K562 (cell line): ENCODE measurements at regions of chr15 and their contacts with region 1.

Region 1: GRCh38 chr15:50003786-50004334 is 115.2 kb downstream of the ATP8B4 start:
- DNase-seq: peak; percentile 78 to 91 (median 84)
- ATAC-seq: peak; percentile 100
- H3K4me3 ChIP-seq: no peak overlapping the region
- H3K27ac ChIP-seq: no peak overlapping the region; the same call in 2 of the 3 replicates
- H3K4me1 ChIP-seq: peaks cover 2 to 4% of the 10 kb centered on the region in 2 experiments; a peak in 1 of 5 replicates
- H3K27me3 ChIP-seq: no peaks in the 10 kb centered on the region
- CTCF ChIP-seq: peak; percentile 87 to 94 (median 89)
- EP300 ChIP-seq: no peak
- POLR2A ChIP-seq: no peak
- RAD21 ChIP-seq: peak; percentile 90 to 93

Region 2: GRCh38 chr15:49235446-49236124 is 768.3 kb before region 1 on chr15:
- CTCF ChIA-PET with region 1: no interaction called
- POLR2A ChIA-PET with region 1: no interaction called
- in situ Hi-C with region 1: no loop called
- intact Hi-C with region 1: loop called (anchors 5 kb)
- DNase-seq: peak in 2 of 4 experiments; percentile 15 to 42
- ATAC-seq: peak; percentile 80
- H3K4me3 ChIP-seq: no peak overlapping the region
- H3K27ac ChIP-seq: no peak overlapping the region
- H3K4me1 ChIP-seq: no peaks in the 10 kb centered on the region
- H3K27me3 ChIP-seq: no peaks in the 10 kb centered on the region
- CTCF ChIP-seq: peak; percentile 21 to 61 (median 51); a peak in 4 of 6 replicates
- EP300 ChIP-seq: no peak
- POLR2A ChIP-seq: no peak
- RAD21 ChIP-seq: peak; percentile 60 to 67

Region 3: DNA sequence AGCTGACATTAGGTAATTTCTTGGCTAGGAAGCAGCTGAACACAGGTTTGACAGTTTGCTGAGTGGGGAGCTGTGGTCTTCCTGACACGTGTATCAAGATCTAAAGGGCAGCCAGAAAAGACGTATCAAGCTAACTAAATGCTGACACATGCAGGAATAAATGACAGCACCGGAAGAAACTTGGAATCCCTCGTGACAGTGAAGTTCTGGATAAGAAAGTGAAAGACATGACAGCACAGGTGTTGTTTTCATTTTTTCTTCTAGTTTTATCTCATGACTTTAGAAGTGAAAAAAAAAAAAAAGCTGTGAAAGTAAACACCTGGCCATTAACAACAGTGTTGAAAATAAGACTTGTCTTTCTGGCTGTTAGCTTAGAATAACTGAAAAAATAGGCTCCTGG is 532.1 kb before region 1 on chr15:
- CTCF ChIA-PET with region 1: no interaction called
- POLR2A ChIA-PET with region 1: no interaction called
- in situ Hi-C with region 1: no loop called
- intact Hi-C with region 1: loop called (anchors 1 kb)
- DNase-seq: peak in 1 of 4 experiments; percentile 2
- ATAC-seq: no peak
- H3K4me3 ChIP-seq: no peak overlapping the region
- H3K27ac ChIP-seq: no peak overlapping the region
- H3K4me1 ChIP-seq: no peaks in the 10 kb centered on the region
- H3K27me3 ChIP-seq: no peaks in the 10 kb centered on the region
- CTCF ChIP-seq: no peak
- EP300 ChIP-seq: no peak
- POLR2A ChIP-seq: no peak
- RAD21 ChIP-seq: no peak

Region 4: DNA sequence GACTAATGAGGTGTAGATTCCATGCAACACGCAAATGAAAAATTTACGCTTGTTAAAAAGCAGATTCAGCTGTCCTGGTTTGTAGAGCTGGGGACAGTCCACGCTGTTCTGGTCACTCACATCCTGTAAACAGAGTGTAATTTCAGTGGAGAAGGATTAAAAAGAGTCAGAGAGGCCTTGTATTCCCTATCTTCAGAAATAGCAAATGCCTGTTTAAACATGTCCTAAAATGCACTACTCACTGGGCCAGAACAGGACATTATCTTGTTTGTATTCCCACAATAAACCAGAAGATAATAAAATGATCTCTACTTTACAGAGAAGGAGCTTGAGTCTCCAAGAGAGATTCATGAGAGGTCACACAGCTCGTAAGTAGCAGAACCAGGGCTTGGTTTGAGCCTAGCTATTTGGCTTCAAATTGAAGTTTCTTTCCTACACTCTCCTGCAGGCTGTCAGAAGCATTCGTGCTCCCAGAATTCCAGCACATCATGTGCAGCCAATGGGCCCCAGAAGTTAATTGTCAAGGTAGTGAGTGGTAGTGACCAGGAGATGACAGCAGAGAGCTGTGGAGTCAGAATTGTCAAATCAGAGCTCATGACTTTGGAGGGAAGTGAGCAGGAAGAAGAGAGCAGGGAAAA is 127.3 kb before region 1 on chr15:
- CTCF ChIA-PET with region 1: no interaction called
- POLR2A ChIA-PET with region 1: no interaction called
- in situ Hi-C with region 1: no loop called
- intact Hi-C with region 1: loop called (anchors 2 kb)
- DNase-seq: peak in 2 of 4 experiments; percentile 6 to 8
- ATAC-seq: peak; percentile 40; the same call in 2 of the 3 replicates
- H3K4me3 ChIP-seq: no peak overlapping the region
- H3K27ac ChIP-seq: no peak overlapping the region
- H3K4me1 ChIP-seq: no peaks in the 10 kb centered on the region
- H3K27me3 ChIP-seq: no peaks in the 10 kb centered on the region
- CTCF ChIP-seq: peak; percentile 33 to 52 (median 38); a peak in 4 of 6 replicates
- EP300 ChIP-seq: no peak
- POLR2A ChIP-seq: no peak
- RAD21 ChIP-seq: peak; percentile 60 to 69